ENCODE measurements at regions of chr12 and their contacts with region 1.

Region 1: GRCh38 chr12:120955232-120955631 is 23.1 kb upstream of the HNF1A start:
- DNase-seq: peak; percentile 22
- ATAC-seq: no peak; the same call in 1 of the 2 replicates
- H3K4me3 ChIP-seq: no peak overlapping the region
- H3K27ac ChIP-seq: no peak overlapping the region
- H3K4me1 ChIP-seq: peaks cover 12% of the 10 kb centered on the region
- H3K27me3 ChIP-seq: no peaks in the 10 kb centered on the region
- CTCF ChIP-seq: no peak

Region 2: DNA sequence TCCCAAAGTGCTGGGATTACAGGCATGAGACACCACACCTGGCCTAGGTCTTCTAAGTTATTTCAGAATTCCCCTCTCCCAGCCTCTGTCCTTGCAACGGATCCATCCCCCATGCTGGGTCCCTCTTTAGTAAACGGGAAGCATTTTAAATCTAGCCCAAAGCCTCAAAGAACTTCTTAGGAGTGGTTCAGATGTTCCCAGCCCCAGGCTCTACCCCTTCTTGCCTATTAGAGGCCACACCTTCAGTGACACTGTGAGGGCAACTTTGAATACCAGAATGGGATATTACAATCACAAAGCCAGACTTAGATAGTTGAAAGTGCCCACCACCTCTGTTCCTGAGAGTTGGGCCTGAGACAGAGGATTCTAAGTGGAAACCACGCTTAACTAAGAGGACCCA is 33.0 kb before region 1 on chr12:
- CTCF ChIA-PET with region 1: no interaction called
- POLR2A ChIA-PET with region 1: interaction called, 13 read pairs
- intact Hi-C with region 1: no loop called
- DNase-seq: no peak
- ATAC-seq: no peak
- H3K4me3 ChIP-seq: no peak overlapping the region
- H3K27ac ChIP-seq: no peak overlapping the region
- H3K4me1 ChIP-seq: peaks cover 17% of the 10 kb centered on the region
- H3K27me3 ChIP-seq: no peaks in the 10 kb centered on the region
- CTCF ChIP-seq: no peak

Region 3: GRCh38 chr12:120939523-120939922 is 15.7 kb before region 1 on chr12:
- CTCF ChIA-PET with region 1: interaction called, 3 read pairs
- POLR2A ChIA-PET with region 1: interaction called, 11 read pairs
- intact Hi-C with region 1: no loop called
- DNase-seq: no peak
- ATAC-seq: no peak
- H3K4me3 ChIP-seq: no peak overlapping the region
- H3K27ac ChIP-seq: no peak overlapping the region
- H3K4me1 ChIP-seq: no peaks in the 10 kb centered on the region
- H3K27me3 ChIP-seq: no peaks in the 10 kb centered on the region
- CTCF ChIP-seq: no peak

Measured in PC-3 (cell line).